ENCODE measurements at regions of chr4 and their contacts with region 1.

Region 1: DNA sequence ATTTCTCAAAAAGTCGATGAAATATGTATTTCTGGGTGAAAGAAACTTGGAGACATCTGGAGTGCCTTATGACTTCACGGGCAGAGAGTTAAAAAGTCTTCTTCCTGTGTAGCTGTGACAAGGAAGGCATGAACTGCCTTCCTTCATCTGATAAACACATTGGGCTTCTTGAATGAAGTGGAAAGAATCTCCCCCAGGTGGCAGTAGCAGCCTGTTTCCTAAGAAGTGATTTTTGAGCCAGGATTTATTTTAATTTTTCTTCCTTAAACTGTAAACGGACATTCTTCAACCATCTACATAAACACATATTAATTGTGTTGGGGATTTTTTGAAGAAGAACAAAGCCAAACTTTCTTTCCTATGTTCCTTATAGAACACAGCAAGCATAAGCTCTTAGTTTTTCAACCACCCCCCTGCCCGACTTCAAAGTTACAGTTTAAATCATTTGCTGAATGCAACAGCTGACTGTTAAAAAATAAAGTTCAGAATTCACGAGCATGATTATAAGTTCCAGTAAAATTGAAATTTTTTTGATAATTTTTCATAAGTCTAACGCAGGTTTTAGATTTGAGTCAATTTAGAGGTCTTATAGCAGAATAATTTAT is 980 bp upstream of the GIMD1 start:
- DNase-seq: peak; percentile 25
- ATAC-seq: no peak
- H3K4me3 ChIP-seq: no peak overlapping the region
- H3K27ac ChIP-seq: no peak overlapping the region
- H3K4me1 ChIP-seq: no peaks in the 10 kb centered on the region
- H3K27me3 ChIP-seq: no peaks in the 10 kb centered on the region
- CTCF ChIP-seq: peak; percentile 71

Region 2: GRCh38 chr4:106502106-106502699 is 132.6 kb after region 1 on chr4:
- CTCF ChIA-PET with region 1: no interaction called
- POLR2A ChIA-PET with region 1: no interaction called
- in situ Hi-C with region 1: no loop called
- intact Hi-C with region 1: loop called (anchors 1 kb)
- DNase-seq: peak; percentile 10
- ATAC-seq: peak; percentile 71
- H3K4me3 ChIP-seq: no peak overlapping the region
- H3K27ac ChIP-seq: no peak overlapping the region
- H3K4me1 ChIP-seq: no peaks in the 10 kb centered on the region
- H3K27me3 ChIP-seq: no peaks in the 10 kb centered on the region; the same call in 1 of the 2 replicates
- CTCF ChIP-seq: peak; percentile 76

Region 3: DNA sequence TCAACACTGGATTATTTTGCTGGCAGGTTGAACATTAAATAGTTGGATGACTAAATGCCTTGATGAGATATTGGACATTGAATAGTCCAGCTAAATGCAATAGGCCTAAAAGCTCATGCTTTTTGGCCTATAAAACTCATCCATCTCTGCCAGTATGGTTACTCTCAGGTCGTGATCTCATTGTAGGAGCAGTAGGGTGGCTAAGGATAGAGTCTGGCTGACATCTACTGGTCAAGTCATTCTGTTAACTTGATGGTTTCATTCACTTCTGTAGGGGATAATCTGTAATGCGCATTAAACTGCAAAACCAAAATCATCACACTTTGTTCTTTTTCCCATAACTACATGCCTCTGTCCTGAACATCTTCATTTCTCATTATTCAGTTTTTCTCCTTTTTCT is 439.5 kb after region 1 on chr4:
- CTCF ChIA-PET with region 1: no interaction called
- POLR2A ChIA-PET with region 1: no interaction called
- in situ Hi-C with region 1: no loop called
- intact Hi-C with region 1: loop called (anchors 5 kb)
- DNase-seq: no peak
- ATAC-seq: no peak
- H3K4me3 ChIP-seq: no peak overlapping the region
- H3K27ac ChIP-seq: no peak overlapping the region
- H3K4me1 ChIP-seq: no peaks in the 10 kb centered on the region
- H3K27me3 ChIP-seq: no peaks in the 10 kb centered on the region
- CTCF ChIP-seq: peak; percentile 23; the same call in 1 of the 2 replicates

Region 4: DNA sequence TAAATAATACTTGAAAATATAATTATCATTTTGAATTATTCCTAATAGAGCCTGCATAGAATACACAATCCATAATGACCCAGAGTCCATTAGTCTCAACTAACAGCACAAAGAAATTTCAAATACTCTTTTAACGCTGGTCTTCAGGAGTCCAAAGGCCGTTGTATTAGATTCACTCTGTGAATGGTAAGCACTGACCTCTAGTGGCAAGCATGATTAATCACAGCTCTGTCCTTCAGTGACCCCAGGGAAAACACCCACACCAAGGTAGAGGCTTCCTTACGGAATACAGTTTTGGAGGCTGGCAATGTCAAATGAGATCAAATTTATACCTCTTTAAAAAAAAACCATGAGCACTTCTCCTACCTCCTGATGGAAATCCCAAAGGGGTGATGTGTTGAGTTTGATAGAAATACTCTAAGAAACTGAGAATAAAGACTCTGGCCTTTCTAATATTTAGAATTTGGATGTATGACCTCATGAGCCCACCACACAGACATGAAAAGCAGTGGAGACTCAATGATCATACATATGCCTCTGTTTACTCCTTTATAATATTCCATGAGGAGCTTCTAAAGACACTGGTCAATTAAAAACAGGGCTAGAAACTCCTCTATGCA is 813.7 kb after region 1 on chr4:
- CTCF ChIA-PET with region 1: no interaction called
- POLR2A ChIA-PET with region 1: no interaction called
- in situ Hi-C with region 1: no loop called
- intact Hi-C with region 1: loop called (anchors 5 kb)
- DNase-seq: peak; percentile 24
- ATAC-seq: peak; percentile 87
- H3K4me3 ChIP-seq: no peak overlapping the region
- H3K27ac ChIP-seq: no peak overlapping the region
- H3K4me1 ChIP-seq: no peaks in the 10 kb centered on the region
- H3K27me3 ChIP-seq: no peaks in the 10 kb centered on the region
- CTCF ChIP-seq: peak; percentile 82